ENCODE measurements at regions of chr20 and their contacts with region 1.

Region 1: GRCh38 chr20:22586645-22587310 is 2.4 kb upstream of the FOXA2 start:
- DNase-seq: no peak
- ATAC-seq: no peak
- H3K4me3 ChIP-seq: no peak overlapping the region
- H3K4me3 Mint-ChIP-seq: no peak overlapping the region
- H3K27ac ChIP-seq: no peak overlapping the region
- H3K27ac Mint-ChIP-seq: no peak overlapping the region
- H3K4me1 ChIP-seq: no peaks in the 10 kb centered on the region
- H3K4me1 Mint-ChIP-seq: no peaks in the 10 kb centered on the region
- H3K27me3 ChIP-seq: peaks cover 18% of the 10 kb centered on the region
- H3K27me3 Mint-ChIP-seq: peaks cover 37 to 40% of the 10 kb centered on the region in 2 donors
- CTCF ChIP-seq: no peak

Region 2: DNA sequence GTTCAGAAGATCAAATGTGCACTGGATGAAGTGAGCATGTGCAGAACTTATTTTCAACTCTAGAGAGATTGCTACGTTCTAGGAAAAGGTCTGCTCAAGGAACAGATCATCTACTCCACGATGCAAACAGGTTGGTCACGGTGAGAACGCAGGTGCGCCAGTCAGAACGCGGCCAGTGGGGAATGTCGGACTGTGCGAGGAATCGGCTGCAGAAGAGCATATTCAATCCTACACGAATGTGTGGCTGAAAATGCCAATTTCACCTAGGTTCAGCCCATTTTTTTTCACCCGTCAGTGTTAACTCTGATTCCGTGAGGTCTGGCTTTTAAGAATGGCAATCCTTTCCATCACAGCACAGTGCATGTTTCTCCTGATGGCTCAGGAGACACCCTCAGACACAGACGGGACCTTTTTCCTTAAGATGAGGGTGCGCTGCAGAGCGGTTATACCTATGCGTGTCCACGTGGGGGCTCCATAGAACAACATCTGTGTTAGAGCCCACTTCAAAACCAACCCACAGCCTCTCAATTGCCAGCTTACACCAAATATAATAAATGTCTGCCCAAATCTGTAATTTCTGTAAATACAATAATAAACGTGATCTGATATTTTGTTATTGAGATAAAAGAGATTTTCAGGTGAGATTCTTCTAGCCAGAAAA is 252.8 kb before region 1 on chr20:
- intact Hi-C with region 1: loop called (anchors 10 kb)
- DNase-seq: peak in 1 of 2 donors; percentile 47
- ATAC-seq: peak; percentile 40 to 86 (median 72)
- H3K4me3 ChIP-seq: no peak overlapping the region
- H3K4me3 Mint-ChIP-seq: no peak overlapping the region
- H3K27ac ChIP-seq: no peak overlapping the region
- H3K27ac Mint-ChIP-seq: no peak overlapping the region
- H3K4me1 ChIP-seq: no peaks in the 10 kb centered on the region
- H3K4me1 Mint-ChIP-seq: peaks cover 0 to under 1% of the 10 kb centered on the region in 2 donors
- H3K27me3 ChIP-seq: no peaks in the 10 kb centered on the region
- H3K27me3 Mint-ChIP-seq: peaks cover 4 to 13% of the 10 kb centered on the region in 2 donors
- CTCF ChIP-seq: peak; percentile 28

Region 3: GRCh38 chr20:22430154-22430745 is 156.5 kb before region 1 on chr20:
- intact Hi-C with region 1: no loop called
- DNase-seq: no peak
- ATAC-seq: no peak
- H3K4me3 ChIP-seq: no peak overlapping the region
- H3K4me3 Mint-ChIP-seq: no peak overlapping the region
- H3K27ac ChIP-seq: no peak overlapping the region
- H3K27ac Mint-ChIP-seq: no peak overlapping the region
- H3K4me1 ChIP-seq: no peaks in the 10 kb centered on the region
- H3K4me1 Mint-ChIP-seq: no peaks in the 10 kb centered on the region
- H3K27me3 ChIP-seq: no peaks in the 10 kb centered on the region
- H3K27me3 Mint-ChIP-seq: no peaks in the 10 kb centered on the region
- CTCF ChIP-seq: no peak

Region 4: DNA sequence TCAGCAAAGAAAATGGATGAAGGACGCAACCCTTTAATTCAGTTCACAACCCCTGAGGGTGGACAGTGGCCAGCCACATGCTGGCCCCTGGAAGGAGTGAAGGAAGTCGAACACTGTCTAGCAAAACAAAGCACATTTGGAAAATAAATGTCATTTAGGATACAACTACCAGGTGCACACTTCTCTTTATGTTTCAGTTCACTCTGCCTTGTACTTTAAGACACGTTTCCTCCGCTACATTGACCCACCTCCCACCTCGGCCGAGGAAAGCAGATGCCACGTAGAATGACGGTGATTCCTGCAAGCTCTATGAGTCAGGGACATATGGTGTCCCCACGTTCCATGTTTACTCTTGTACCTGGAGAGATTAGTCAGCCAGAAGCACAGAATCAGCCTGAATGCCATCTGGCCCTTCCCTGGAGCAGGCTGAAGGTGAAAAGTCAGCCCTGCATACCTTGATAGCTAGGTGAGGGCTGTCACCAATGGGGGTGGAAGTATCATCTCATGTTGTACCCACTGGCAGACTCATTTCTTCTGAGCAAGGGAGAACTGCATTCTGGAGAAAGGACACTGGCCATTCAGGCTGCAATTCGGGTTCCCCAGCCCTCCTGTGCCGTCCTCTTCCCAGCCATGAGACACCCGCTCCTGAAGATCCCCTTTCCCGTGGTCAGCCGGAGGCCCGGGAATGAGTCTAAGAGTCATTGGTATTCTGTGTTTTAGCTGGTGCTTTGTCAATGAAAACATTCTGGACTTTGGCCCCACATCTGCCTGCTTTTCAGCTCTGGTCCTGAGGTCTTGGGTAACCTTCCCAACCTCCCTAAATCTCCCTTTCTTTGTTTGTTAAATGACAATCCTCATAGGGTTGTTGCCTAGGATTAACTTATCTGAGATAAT is 63.0 kb before region 1 on chr20:
- intact Hi-C with region 1: no loop called
- DNase-seq: no peak
- ATAC-seq: no peak
- H3K4me3 ChIP-seq: no peak overlapping the region
- H3K4me3 Mint-ChIP-seq: no peak overlapping the region
- H3K27ac ChIP-seq: no peak overlapping the region
- H3K27ac Mint-ChIP-seq: no peak overlapping the region
- H3K4me1 ChIP-seq: no peaks in the 10 kb centered on the region
- H3K4me1 Mint-ChIP-seq: no peaks in the 10 kb centered on the region
- H3K27me3 ChIP-seq: no peaks in the 10 kb centered on the region
- H3K27me3 Mint-ChIP-seq: no peaks in the 10 kb centered on the region
- CTCF ChIP-seq: no peak